Endothelial cell of umbilical vein (primary cell): ENCODE measurements at regions of chr10 and their contacts with region 1.

Region 1: DNA sequence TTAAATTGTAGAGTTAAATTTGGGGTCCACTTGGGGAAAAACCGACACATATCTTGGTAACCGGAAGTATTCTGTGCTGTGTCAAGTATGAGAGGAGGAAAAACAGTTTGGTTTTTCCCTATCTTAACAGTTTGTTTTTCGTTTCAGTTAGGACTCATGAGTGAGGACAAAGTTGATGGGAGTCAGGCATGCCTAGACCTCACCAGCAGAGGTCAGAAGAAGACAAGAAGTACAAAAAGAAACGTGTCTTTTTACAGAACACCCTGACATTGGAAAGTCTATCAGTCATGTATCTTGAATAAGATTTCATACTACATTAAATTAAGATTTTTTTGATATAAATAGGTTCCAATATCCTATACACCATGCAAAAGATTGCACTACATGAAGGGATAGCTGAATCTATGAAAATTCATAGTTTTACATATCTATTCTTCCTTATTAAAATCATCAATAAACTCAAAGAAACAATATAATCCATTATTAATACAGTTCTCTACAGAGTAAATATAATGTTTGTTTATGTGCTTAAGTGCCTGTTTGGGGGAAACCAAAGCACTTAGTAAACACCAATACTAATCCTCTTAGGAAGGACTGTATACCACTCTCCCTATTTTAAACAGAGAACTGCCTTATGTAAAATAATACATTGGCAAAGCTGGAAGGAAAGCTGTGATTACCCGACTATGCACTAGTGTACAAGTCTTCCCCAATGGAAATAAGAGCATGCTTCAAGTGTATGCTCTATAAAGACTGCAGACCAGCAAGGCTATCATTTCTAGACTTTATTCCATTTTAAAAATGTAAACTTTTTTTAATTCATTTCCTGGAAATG is 95.6 kb downstream of the USP6NL start:
- DNase-seq: peak; percentile 70
- H3K4me3 ChIP-seq: no peak overlapping the region
- H3K27ac ChIP-seq: no peak overlapping the region
- H3K4me1 ChIP-seq: peaks cover 10% of the 10 kb centered on the region
- H3K27me3 ChIP-seq: no peaks in the 10 kb centered on the region
- CTCF ChIP-seq: peak; percentile 63 to 73
- POLR2A ChIP-seq: no peak

Region 2: GRCh38 chr10:11468126-11468742 is 47.6 kb before region 1 on chr10:
- CTCF ChIA-PET with region 1: no interaction called
- POLR2A ChIA-PET with region 1: no interaction called
- dilution Hi-C with region 1: no loop called
- intact Hi-C with region 1: no loop called
- DNase-seq: peak; percentile 67
- H3K4me3 ChIP-seq: no peak overlapping the region
- H3K27ac ChIP-seq: peak overlapping the region; percentile 22
- H3K4me1 ChIP-seq: peaks cover 10% of the 10 kb centered on the region
- H3K27me3 ChIP-seq: no peaks in the 10 kb centered on the region
- CTCF ChIP-seq: no peak
- POLR2A ChIP-seq: no peak

Region 3: GRCh38 chr10:11602919-11603523 is 87.2 kb after region 1 on chr10:
- CTCF ChIA-PET with region 1: interaction called, 3 read pairs
- POLR2A ChIA-PET with region 1: no interaction called
- dilution Hi-C with region 1: no loop called
- intact Hi-C with region 1: loop called (anchors 2 kb)
- DNase-seq: peak; percentile 51
- H3K4me3 ChIP-seq: no peak overlapping the region
- H3K27ac ChIP-seq: no peak overlapping the region
- H3K4me1 ChIP-seq: peaks cover 12% of the 10 kb centered on the region
- H3K27me3 ChIP-seq: no peaks in the 10 kb centered on the region
- CTCF ChIP-seq: no peak
- POLR2A ChIP-seq: no peak

Region 4: DNA sequence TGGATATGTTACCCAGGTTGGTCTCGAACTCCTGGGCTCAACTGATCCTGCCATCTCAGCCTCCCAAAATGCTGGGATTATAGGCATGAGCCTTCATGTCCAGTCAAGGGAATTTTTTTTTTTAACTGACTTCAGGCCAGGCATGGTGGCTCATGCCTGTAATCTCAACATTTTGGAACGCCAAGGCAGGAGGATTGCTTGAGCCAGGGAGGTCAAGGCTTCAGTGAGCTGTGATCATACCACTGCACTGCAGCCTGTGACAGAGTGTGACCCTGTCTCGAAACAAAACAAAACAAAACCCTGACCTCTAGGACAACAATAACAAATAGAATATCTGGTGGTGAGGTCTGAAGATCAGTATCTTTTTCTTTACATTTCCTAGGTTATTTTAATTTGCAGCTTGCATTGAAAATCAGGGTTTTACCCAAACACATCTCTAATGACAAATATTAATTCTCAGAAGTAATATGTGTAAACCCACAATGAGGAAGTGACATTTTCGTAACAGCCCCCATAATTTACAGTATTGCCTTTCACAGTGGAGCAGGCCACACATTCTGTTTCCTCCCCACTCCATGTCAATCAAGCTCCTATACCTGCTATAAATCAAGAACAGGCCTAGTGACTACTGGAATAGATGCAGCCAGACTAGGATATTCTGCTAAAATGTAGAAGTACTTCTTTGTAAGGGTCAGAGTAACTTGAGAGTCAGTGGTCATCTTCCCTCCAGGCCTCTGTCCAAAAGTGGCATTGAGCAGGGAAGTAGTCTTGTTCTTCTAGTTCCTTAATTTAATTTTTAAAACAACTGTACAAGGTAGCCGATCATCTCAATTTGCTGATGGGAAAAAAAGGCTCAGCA is 183.1 kb after region 1 on chr10:
- CTCF ChIA-PET with region 1: no interaction called
- POLR2A ChIA-PET with region 1: no interaction called
- dilution Hi-C with region 1: no loop called
- intact Hi-C with region 1: no loop called
- DNase-seq: no peak
- H3K4me3 ChIP-seq: no peak overlapping the region
- H3K27ac ChIP-seq: no peak overlapping the region
- H3K4me1 ChIP-seq: no peaks in the 10 kb centered on the region
- H3K27me3 ChIP-seq: no peaks in the 10 kb centered on the region
- CTCF ChIP-seq: no peak
- POLR2A ChIP-seq: no peak

Region 5: DNA sequence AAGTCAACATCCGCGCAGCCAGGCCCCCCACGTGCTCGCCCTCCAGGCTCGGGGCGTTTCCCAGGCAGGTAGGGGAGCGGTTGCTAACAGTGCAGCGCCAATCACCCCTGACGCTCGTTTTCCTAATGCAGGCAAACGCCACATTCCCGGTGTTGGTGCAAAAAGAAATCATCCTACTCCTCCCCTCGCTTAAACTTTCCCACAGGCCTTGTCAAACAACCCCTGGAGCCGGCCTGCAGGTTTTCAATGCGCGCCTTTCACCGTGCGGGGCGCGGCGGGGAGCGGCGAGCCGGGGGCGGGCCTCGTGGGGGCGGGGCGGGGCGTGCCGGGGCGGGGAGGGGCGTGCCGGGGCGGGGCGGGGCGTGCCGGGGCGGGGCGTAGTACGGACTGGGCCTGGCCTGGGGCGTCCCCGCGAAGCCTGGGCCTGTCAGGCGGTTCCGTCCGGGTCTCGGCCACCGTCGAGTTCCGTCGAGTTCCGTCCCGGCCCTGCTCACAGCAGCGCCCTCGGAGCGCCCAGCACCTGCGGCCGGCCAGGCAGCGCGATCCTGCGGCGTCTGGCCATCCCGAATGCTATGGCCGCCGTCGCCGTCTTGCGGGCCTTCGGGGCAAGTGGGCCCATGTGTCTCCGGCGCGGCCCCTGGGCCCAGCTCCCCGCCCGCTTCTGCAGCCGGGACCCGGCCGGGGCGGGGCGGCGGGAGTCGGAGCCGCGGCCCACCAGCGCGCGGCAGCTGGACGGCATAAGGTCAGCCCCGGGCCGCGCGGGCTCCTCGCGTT is 226.4 kb after region 1 on chr10 and contains the start of gene ECHDC3:
- CTCF ChIA-PET with region 1: interaction called, 3 read pairs
- POLR2A ChIA-PET with region 1: no interaction called
- dilution Hi-C with region 1: no loop called
- intact Hi-C with region 1: loop called (anchors 5 kb)
- DNase-seq: peak; percentile 47
- H3K4me3 ChIP-seq: peak within 1 kb of the TSS in 2 of 3 experiments; percentile 50 to 52
- H3K27ac ChIP-seq: no peak within 1 kb of the TSS
- H3K4me1 ChIP-seq: peaks cover 3% of the 10 kb centered on the region
- H3K27me3 ChIP-seq: peaks cover 0 to 2% of the 10 kb centered on the region in 2 experiments
- CTCF ChIP-seq: no peak
- POLR2A ChIP-seq: no peak
- total RNA-seq, gene ECHDC3: 3.7 and 6.0 TPM in 2 replicates